ENCODE measurements at regions of chr1 and their contacts with region 1.

Region 1: DNA sequence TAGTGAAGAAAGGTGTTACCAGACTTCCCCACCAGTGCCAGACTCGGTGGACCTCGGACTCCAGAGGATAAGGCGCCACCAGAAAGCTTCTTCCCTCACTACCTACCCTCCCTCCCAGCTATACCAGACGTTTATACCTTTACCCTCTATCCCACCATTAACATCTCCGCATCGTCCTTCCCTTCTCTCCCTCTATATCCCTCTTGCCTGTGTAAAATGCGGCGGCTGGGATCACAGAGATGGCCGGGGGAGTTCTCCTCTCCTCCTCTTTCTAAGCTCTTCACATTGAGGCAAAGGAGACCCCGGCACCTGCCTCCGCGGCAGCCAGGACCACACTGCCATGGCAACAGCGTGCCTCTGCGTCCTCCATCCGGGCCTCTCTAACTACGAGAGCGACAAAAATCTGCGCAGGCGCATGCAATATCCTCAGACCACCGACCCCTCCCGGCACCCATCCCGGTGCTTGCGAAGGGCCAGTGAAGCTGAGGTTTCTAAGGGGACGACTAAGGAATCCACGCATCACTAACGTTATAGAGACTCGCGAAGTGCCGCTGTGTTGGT is at the start of gene CCDC181:
- H3K4me3 ChIP-seq: peak within 1 kb of the TSS; percentile 80
- H3K27ac ChIP-seq: no peak within 1 kb of the TSS
- H3K4me1 ChIP-seq: no peaks in the 10 kb centered on the region
- CTCF ChIP-seq: no peak

Region 2: DNA sequence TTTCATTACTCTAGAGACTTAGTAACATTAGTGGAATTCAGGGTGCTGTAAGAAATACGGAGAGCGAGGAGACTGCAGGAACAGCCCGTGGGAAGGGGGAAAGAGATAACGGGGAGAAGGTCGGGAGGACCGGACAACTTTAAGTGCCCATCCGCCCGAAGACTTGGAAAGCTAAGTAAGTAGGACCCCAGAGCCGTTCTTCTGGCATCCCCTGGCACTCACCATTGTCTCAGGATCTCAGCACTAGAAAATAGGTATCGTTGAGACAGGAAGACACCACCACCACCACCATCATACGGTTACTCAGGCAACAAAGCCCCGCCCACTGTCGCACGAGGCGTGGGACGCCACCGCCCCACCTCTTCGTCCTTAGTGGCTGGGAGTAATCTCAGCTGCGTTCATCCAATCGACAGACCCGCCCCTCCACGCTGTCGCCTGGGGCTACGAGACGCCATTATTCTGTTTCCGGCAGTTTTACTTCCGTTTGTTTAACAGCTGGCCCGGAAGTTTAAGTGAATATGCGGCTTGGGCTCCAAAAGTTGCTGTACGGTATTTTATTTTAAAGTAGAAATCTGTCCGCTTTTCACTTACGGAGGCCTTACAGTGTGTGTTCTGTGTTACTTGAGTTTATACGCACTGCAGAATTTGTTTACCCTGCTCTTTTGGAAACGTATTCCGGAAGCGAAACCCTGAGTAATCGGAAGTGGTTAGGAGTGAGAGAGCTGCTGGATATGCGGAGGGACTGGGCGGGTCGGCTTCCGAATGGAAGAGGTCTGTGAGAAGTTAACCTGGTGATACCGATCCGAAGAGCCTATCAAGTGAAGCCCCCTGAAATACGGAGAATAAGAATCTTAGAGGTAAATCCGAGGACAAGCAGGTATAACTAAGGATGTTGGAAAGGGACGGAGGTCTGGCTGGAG is 59.4 kb before region 1 on chr1 and contains the starts of genes BLZF1 and NME7:
- CTCF ChIA-PET with region 1: no interaction called
- POLR2A ChIA-PET with region 1: interaction called, 11 read pairs
- H3K4me3 ChIP-seq: peak within 1 kb of the TSS; percentile 83
- H3K27ac ChIP-seq: peak within 1 kb of the TSS; percentile 67
- H3K4me1 ChIP-seq: 0 out of 2 replicates have a peak, but pooled peaks cover 2% of the 10 kb centered on the region
- CTCF ChIP-seq: no peak

Measured in HEK293 (cell line).